ENCODE measurements at regions of chr6 and their contacts with region 1.

Region 1: GRCh38 chr6:143450453-143451371 is at the starts of genes ADAT2 and PEX3:
- DNase-seq: peak; percentile 97
- H3K4me3 Mint-ChIP-seq: peak within 1 kb of the TSS; percentile 88
- H3K27ac Mint-ChIP-seq: peak within 1 kb of the TSS; percentile 91
- H3K4me1 Mint-ChIP-seq: peaks cover 45% of the 10 kb centered on the region
- H3K27me3 Mint-ChIP-seq: no peaks in the 10 kb centered on the region
- total RNA-seq, gene ADAT2: 26.0 to 27.0 TPM
- total RNA-seq, gene PEX3: 19.7 to 21.1 TPM

Region 2: GRCh38 chr6:142902636-142903053 is 548.1 kb before region 1 on chr6:
- CTCF ChIA-PET with region 1: no interaction called
- POLR2A ChIA-PET with region 1: no interaction called
- intact Hi-C with region 1: loop called (anchors 2 kb)
- DNase-seq: peak; percentile 87
- H3K4me3 Mint-ChIP-seq: peak overlapping the region; percentile 56
- H3K27ac Mint-ChIP-seq: peak overlapping the region; percentile 87
- H3K4me1 Mint-ChIP-seq: peaks cover 59% of the 10 kb centered on the region
- H3K27me3 Mint-ChIP-seq: no peaks in the 10 kb centered on the region

Region 3: GRCh38 chr6:143060354-143060805 is 390.3 kb before region 1 on chr6:
- CTCF ChIA-PET with region 1: interaction called, 3 read pairs
- POLR2A ChIA-PET with region 1: no interaction called
- intact Hi-C with region 1: loop called (anchors 1 kb)
- DNase-seq: peak; percentile 83
- H3K4me3 Mint-ChIP-seq: peak overlapping the region; percentile 89
- H3K27ac Mint-ChIP-seq: peak overlapping the region; percentile 92
- H3K4me1 Mint-ChIP-seq: peaks cover 23% of the 10 kb centered on the region
- H3K27me3 Mint-ChIP-seq: no peaks in the 10 kb centered on the region

Region 4: DNA sequence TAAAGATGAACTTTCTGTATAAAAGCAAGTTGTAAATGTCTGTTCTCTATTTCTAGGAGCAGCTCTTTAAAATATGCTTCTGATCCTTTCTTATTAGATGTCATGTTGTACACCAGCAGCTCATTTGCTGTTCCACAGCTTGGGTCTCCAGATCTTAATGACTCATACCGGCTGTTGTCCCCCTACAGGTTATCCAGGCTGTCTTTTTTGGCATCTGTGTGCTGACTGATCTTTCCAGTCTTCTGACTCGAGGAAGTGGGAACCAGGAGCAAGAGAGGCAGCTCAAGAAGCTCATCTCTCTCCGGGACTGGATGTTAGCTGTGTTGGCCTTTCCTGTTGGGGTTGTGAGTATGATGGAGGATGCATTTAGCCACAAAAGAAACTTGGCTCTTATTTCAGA is 314.1 kb before region 1 on chr6:
- CTCF ChIA-PET with region 1: no interaction called
- POLR2A ChIA-PET with region 1: no interaction called
- intact Hi-C with region 1: loop called (anchors 10 kb)
- DNase-seq: no peak
- H3K4me3 Mint-ChIP-seq: peak overlapping the region; percentile 13
- H3K27ac Mint-ChIP-seq: peak overlapping the region; percentile 61
- H3K4me1 Mint-ChIP-seq: peaks cover 42% of the 10 kb centered on the region
- H3K27me3 Mint-ChIP-seq: no peaks in the 10 kb centered on the region

Region 5: DNA sequence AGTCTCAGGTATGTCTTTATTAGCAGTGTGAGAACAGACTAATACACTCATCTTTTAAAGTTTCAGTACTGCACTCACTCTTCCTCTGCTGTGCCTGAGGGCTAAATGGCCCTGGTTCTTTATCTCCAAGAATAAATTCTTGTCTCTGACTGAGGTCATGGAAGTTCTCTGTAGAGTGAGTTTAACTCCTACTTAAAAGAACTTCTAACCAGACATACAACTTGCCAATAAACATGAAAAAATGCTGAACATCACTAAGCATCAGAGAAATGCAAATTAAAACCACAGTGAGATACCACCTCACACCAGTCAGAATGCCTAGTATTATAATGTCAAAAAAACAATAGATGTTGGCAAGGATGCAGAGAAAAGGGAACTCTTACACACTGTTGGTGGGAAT is 73.9 kb before region 1 on chr6:
- CTCF ChIA-PET with region 1: no interaction called
- POLR2A ChIA-PET with region 1: no interaction called
- intact Hi-C with region 1: no loop called
- DNase-seq: no peak
- H3K4me3 Mint-ChIP-seq: no peak overlapping the region
- H3K27ac Mint-ChIP-seq: no peak overlapping the region
- H3K4me1 Mint-ChIP-seq: no peaks in the 10 kb centered on the region
- H3K27me3 Mint-ChIP-seq: peaks cover 11% of the 10 kb centered on the region

Region 6: DNA sequence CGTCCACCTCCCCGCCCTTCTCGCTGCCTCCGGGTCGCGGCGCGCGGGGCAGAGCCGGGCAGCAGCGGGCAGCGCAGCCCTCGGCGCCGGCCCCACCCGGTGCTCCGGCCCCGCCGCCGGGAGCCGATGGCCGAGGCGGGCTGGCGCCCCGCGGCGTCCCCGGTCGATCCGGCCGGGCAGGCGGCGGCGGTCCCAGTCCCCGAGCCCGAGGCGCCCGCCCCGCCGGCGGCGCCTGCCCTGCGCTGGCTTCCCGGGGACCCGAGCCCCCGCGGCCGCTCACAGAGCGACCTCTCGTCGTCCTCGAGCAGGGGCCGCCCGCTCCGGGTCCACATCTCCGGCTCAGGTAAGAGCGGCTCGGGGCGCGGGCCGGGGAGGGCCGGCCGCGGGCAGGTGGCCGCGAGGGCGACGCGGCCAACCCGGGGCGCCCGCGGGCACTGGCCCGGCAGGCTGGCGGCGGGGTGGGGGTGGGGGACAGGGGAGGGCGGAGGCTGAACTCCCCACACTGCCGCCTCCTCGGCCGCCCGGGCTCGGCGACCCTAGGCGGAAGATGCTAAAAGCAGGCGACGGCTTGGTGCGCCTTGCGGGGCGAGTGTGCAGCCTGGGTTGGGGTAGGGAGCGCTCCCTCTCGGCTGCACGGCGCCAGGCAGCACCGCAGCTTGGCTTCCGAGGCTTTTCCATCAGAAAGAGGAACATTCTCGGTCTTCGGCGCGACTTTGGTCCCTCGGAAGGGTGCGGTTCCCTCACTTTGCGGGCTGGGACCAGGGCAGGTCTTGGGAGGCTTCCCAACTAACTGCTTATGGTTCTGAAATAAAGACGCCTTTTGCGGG is 86.4 kb after region 1 on chr6:
- CTCF ChIA-PET with region 1: interaction called, 3 read pairs
- POLR2A ChIA-PET with region 1: interaction called, 10 read pairs
- intact Hi-C with region 1: loop called (anchors 1 kb)
- DNase-seq: peak; percentile 73
- H3K4me3 Mint-ChIP-seq: peak overlapping the region; percentile 85
- H3K27ac Mint-ChIP-seq: peak overlapping the region; percentile 80
- H3K4me1 Mint-ChIP-seq: peaks cover 39% of the 10 kb centered on the region
- H3K27me3 Mint-ChIP-seq: no peaks in the 10 kb centered on the region

Region 7: GRCh38 chr6:143569040-143569439 is 118.3 kb after region 1 on chr6:
- CTCF ChIA-PET with region 1: no interaction called
- POLR2A ChIA-PET with region 1: no interaction called
- intact Hi-C with region 1: loop called (anchors 5 kb)
- DNase-seq: peak; percentile 13
- H3K4me3 Mint-ChIP-seq: no peak overlapping the region
- H3K27ac Mint-ChIP-seq: no peak overlapping the region
- H3K4me1 Mint-ChIP-seq: peaks cover 43% of the 10 kb centered on the region
- H3K27me3 Mint-ChIP-seq: no peaks in the 10 kb centered on the region

Region 8: DNA sequence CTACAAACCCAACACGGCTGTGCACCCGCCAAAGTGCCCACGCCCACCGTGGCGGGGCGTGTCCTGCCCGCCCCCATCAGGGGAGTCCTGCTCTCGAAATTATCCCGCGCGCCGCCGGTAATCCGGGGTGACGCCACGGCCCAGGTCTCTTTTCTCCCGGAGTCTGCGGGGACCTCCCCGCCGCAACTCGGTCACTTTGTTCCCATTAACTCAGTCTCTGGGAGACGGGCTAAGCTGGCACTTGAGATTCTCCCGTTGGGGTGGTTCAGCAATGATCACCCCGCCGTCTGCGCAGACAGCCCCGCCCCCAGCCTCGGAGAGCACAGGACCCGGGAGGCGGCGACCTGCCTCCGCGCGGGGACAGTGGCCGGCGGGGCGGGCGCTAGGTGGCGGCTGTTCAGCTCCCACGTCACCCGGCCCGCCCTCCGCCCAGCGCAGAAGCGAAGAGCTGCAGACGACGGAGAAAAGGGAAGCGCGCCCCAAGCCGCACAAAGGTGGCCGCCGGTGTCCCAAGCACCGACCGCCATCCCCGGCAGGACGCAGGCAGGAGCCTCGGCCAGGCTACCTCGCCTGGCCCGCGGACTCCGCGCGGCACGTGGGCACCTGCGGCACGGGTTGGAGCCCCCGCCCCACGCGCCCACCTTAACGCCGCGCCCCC is 613.2 kb after region 1 on chr6:
- CTCF ChIA-PET with region 1: no interaction called
- POLR2A ChIA-PET with region 1: interaction called, 6 read pairs
- intact Hi-C with region 1: loop called (anchors 2 kb)
- DNase-seq: peak; percentile 91
- H3K4me3 Mint-ChIP-seq: peak overlapping the region; percentile 82
- H3K27ac Mint-ChIP-seq: peak overlapping the region; percentile 67
- H3K4me1 Mint-ChIP-seq: peaks cover 43% of the 10 kb centered on the region
- H3K27me3 Mint-ChIP-seq: no peaks in the 10 kb centered on the region